Ovary (tissue), 10 donors: ENCODE measurements at regions of chr17 and their contacts with region 1.

Region 1: GRCh38 chr17:7280519-7281429 is 744 bp upstream of the SLC2A4 start:
- DNase-seq: peak; percentile 75 to 91 (median 85)
- H3K4me3 ChIP-seq: peak overlapping the region; percentile 23
- H3K27ac ChIP-seq: peak overlapping the region; percentile 44 to 62
- H3K4me1 ChIP-seq: peaks cover 6% of the 10 kb centered on the region
- H3K27me3 ChIP-seq: no peaks in the 10 kb centered on the region
- CTCF ChIP-seq: peak; percentile 80 to 96 (median 95)
- EP300 ChIP-seq: no peak
- POLR2A ChIP-seq: peak; percentile 25

Region 2: GRCh38 chr17:7296189-7296902 is 15.6 kb after region 1 on chr17:
- intact Hi-C with region 1: loop called (anchors 1 to 2 kb)
- DNase-seq: peak; percentile 78 to 90 (median 83)
- H3K4me3 ChIP-seq: peak overlapping the region; percentile 6
- H3K27ac ChIP-seq: no peak overlapping the region
- H3K4me1 ChIP-seq: peaks cover 9% of the 10 kb centered on the region
- H3K27me3 ChIP-seq: peaks cover 3% of the 10 kb centered on the region
- CTCF ChIP-seq: peak; percentile 88 to 98 (median 94)
- EP300 ChIP-seq: no peak
- POLR2A ChIP-seq: no peak